HepG2 (cell line): ENCODE measurements at regions of chr6 and their contacts with region 1.

Region 1: GRCh38 chr6:101482606-101483005 is 89.1 kb downstream of the GRIK2 start:
- DNase-seq: no peak
- ATAC-seq: no peak
- H3K4me3 ChIP-seq: no peak overlapping the region
- H3K27ac ChIP-seq: no peak overlapping the region
- H3K4me1 ChIP-seq: no peaks in the 10 kb centered on the region
- H3K27me3 ChIP-seq: no peaks in the 10 kb centered on the region
- CTCF ChIP-seq: no peak
- EP300 ChIP-seq: no peak
- POLR2A ChIP-seq: no peak
- RAD21 ChIP-seq: no peak

Region 2: GRCh38 chr6:101445527-101445926 is 37.1 kb before region 1 on chr6:
- CTCF ChIA-PET with region 1: no interaction called
- POLR2A ChIA-PET with region 1: no interaction called
- in situ Hi-C with region 1: no loop called
- intact Hi-C with region 1: loop called (anchors 1 kb)
- DNase-seq: peak; percentile 1
- ATAC-seq: no peak
- H3K4me3 ChIP-seq: no peak overlapping the region
- H3K27ac ChIP-seq: no peak overlapping the region
- H3K4me1 ChIP-seq: no peaks in the 10 kb centered on the region
- H3K27me3 ChIP-seq: no peaks in the 10 kb centered on the region
- CTCF ChIP-seq: no peak
- EP300 ChIP-seq: no peak
- POLR2A ChIP-seq: no peak
- RAD21 ChIP-seq: no peak

Region 3: DNA sequence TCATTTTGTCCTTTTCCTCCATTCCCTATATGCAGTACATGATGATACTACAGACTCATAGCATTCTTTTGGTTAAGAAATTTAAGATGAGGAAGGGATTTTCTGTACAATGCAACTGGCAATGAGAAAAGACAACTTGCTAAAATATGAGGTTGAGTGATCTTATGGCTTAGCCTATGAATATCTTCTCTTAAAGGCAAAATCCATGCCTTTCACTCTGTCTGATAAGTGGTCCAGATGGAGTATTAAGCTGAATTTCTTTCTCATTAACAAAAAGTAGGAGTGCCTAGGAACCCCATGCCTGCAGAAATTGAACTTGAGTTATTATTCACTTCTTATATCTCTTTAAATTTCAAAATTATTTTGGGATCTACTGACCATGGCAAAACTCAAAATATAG is 46.2 kb after region 1 on chr6:
- CTCF ChIA-PET with region 1: no interaction called
- POLR2A ChIA-PET with region 1: no interaction called
- in situ Hi-C with region 1: no loop called
- intact Hi-C with region 1: no loop called
- DNase-seq: no peak
- ATAC-seq: no peak
- H3K4me3 ChIP-seq: no peak overlapping the region
- H3K27ac ChIP-seq: no peak overlapping the region
- H3K4me1 ChIP-seq: no peaks in the 10 kb centered on the region
- H3K27me3 ChIP-seq: no peaks in the 10 kb centered on the region
- CTCF ChIP-seq: no peak
- EP300 ChIP-seq: no peak
- POLR2A ChIP-seq: no peak
- RAD21 ChIP-seq: no peak